Vagina (tissue), 2 donors: ENCODE measurements at regions of chr11 and their contacts with region 1.

Region 1: DNA sequence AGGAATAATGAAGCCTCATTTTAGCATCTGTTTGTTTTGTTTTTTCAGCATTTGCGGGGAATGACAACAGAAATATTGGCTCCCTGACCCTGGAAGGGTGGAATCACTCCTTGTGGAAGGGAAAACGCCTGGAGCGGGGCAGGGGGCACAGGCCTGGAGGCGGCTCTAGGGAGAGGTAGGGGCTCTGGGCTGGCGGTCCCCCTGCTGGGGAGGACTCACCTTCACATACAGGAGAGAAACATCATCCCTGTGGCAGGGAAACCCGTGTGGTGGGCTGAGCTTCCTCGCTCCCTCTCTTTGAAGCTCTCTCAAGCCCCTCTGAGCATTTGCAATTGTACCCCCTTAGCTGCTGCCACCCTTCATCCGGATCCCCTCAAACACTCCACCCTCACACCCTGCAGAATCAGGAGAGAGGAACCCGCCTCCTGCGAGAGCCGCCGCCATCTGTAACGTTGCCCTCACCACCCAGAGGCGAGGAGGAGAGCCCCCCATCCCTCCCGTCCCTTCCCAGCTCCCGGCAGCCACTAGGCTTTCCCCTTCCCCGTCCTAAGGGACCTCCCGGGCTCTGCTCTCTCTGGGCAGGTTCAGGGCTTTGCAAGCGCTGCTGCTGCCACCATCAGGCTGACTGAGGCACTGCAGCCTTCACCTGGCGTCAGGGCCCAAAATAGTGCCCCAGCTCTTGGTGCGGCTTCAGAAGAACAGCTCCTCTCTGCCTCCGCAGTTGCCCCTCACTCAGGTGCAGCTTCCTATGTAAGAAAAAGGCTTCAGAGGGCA is 10.4 kb downstream of the KIRREL3 start:
- DNase-seq: no peak
- H3K4me3 ChIP-seq: no peak overlapping the region
- H3K27ac ChIP-seq: no peak overlapping the region
- H3K4me1 ChIP-seq: no peaks in the 10 kb centered on the region
- H3K27me3 ChIP-seq: no peaks in the 10 kb centered on the region
- CTCF ChIP-seq: peak; percentile 53 to 66 (median 59)
- POLR2A ChIP-seq: no peak

Region 2: DNA sequence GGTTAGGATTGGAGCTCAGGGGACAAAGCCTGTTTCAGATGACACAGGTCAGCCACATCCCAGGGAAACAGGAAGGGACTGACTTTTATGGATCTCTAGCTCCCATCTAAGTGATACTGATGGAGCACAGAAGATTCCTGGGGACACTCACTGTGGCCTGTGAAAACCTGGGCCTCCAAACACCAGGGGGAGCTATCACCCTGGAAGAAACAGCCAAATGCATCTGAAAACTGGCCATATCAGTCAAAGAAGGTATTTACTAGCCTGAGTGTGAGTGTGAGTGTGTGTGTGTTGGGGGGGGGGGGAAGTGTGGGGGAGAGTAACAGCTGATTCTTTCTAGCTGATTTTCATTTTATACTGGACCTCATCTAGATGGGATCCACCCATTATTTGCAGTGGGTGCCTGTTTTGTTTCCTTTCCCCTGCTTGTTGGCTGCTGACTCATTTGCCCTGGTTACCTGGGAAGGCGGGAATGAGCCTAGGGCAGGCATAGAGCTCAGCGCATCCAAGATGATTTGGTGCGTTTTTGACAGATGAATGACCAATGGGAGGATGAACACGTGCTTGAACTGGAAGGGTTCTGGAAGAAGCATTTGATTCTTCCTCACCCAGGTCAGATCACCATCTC is 273.6 kb before region 1 on chr11:
- intact Hi-C with region 1: loop called (anchors 10 kb)
- DNase-seq: no peak
- H3K4me3 ChIP-seq: no peak overlapping the region
- H3K27ac ChIP-seq: no peak overlapping the region
- H3K4me1 ChIP-seq: no peaks in the 10 kb centered on the region
- H3K27me3 ChIP-seq: no peaks in the 10 kb centered on the region
- CTCF ChIP-seq: peak in 2 of 3 experiments; percentile 23 to 25
- POLR2A ChIP-seq: no peak

Region 3: GRCh38 chr11:127098684-127099083 is 108.6 kb after region 1 on chr11:
- intact Hi-C with region 1: no loop called
- DNase-seq: no peak
- H3K4me3 ChIP-seq: no peak overlapping the region
- H3K27ac ChIP-seq: no peak overlapping the region
- H3K4me1 ChIP-seq: no peaks in the 10 kb centered on the region
- H3K27me3 ChIP-seq: no peaks in the 10 kb centered on the region
- CTCF ChIP-seq: no peak
- POLR2A ChIP-seq: no peak